MCF 10A (cell line): ENCODE measurements at regions of chr5 and their contacts with region 1.

Region 1: DNA sequence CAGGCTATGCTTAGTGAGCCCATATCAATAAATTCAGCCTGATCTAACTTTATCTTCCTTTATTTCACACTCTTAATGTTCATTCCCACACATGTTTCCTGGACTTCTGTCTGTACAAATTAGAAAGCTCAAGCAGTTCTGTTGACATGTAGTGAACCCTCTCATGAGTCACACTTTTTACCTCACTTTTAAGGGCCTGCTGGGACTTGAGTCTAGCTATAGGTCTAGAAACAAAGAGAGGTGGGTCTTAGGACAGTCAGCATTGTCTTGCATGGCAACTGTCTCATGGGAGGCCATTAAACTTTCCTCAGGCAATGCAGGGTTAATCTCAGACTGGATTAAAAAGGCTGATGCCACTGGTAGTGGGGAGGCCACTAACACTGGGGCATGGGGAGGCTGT is 8.6 kb upstream of the CCNH start:
- DNase-seq: peak; percentile 54
- H3K4me3 Mint-ChIP-seq: no peak overlapping the region
- H3K27ac Mint-ChIP-seq: no peak overlapping the region
- H3K4me1 Mint-ChIP-seq: peaks cover 12% of the 10 kb centered on the region
- H3K27me3 Mint-ChIP-seq: no peaks in the 10 kb centered on the region
- CTCF ChIP-seq: no peak

Region 2: DNA sequence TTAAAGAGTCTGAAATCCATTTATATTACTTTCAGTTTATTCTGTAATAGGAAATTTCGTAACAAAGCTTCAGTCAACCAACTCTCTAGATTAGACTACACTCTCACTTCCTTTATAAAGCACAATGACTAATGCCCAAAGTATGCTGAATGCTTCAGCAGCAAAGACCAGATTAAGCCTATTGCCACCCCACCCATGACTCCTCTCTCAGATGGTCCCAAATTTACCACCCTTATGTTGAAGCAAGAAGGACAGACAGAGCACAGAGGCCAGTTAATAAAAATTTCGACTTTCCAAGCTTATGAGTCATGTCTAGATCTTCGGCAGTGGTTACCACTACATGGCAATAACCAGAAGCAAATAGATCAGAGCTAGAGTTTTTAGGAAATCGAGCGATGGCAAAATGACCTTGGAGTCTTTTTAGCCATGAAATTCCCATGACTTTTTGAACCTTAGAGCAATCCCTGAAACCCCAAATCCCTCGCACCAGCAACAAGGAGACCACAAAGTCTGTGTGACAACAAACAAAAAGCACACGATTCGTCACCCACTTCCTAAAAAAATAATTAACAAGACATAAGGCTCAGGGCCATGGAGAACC is 441.4 kb before region 1 on chr5:
- CTCF ChIA-PET with region 1: no interaction called
- POLR2A ChIA-PET with region 1: no interaction called
- intact Hi-C with region 1: no loop called
- DNase-seq: peak; percentile 63
- H3K4me3 Mint-ChIP-seq: no peak overlapping the region
- H3K27ac Mint-ChIP-seq: no peak overlapping the region
- H3K4me1 Mint-ChIP-seq: peaks cover 8% of the 10 kb centered on the region
- H3K27me3 Mint-ChIP-seq: no peaks in the 10 kb centered on the region
- CTCF ChIP-seq: no peak

Region 3: DNA sequence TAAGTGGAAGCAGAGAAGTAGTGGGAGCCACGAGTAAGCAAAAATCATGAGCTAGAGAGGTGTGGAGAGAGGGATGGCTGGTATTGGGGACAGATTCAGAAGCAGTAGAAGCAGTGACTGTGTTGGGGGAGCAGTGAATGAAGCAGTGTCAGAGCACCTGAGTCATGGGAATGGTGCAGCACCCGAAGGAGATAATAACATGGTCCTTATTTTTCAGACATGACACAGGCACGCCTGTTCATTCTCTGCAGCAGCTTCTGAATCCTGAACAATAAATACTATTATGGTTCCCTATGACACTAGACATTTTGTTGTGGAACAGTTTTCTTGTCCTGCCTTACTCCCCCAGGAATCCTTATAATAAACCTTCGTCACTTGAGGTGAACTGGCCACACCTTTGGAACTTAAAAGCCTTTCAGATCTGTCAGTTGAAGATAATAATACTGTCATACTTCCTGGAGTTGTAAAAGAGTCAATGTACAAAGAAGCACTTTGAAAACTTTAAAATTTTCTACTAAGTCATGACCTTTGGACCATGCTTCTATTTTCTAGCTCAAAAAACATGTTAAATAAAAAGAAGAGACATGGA is 160.6 kb before region 1 on chr5:
- CTCF ChIA-PET with region 1: no interaction called
- POLR2A ChIA-PET with region 1: no interaction called
- intact Hi-C with region 1: no loop called
- DNase-seq: no peak
- H3K4me3 Mint-ChIP-seq: no peak overlapping the region
- H3K27ac Mint-ChIP-seq: no peak overlapping the region
- H3K4me1 Mint-ChIP-seq: no peaks in the 10 kb centered on the region
- H3K27me3 Mint-ChIP-seq: no peaks in the 10 kb centered on the region
- CTCF ChIP-seq: no peak

Region 4: GRCh38 chr5:87627363-87627762 is 206.1 kb after region 1 on chr5:
- CTCF ChIA-PET with region 1: no interaction called
- POLR2A ChIA-PET with region 1: no interaction called
- intact Hi-C with region 1: loop called (anchors 10 kb)
- DNase-seq: no peak
- H3K4me3 Mint-ChIP-seq: no peak overlapping the region
- H3K27ac Mint-ChIP-seq: no peak overlapping the region
- H3K4me1 Mint-ChIP-seq: no peaks in the 10 kb centered on the region
- H3K27me3 Mint-ChIP-seq: peaks cover 79% of the 10 kb centered on the region
- CTCF ChIP-seq: no peak

Region 5: DNA sequence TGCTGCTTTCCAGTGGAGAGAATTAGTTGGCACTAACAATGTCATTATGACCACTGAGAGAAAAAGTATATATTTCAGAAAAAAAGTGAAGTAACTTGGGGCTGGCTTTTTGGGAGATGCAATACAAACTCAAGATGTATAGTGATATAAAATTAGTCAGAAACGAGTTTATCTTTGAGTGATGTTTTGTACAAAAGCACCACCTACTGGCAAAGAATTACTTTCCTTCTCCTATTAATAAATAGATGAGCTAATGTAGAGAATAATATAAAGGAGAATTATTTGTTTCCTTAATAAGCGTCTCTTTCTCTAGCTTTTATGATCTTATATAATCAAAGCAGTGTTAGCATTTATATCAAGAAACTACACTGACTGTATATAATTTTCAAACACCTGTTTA is 1302.9 kb after region 1 on chr5:
- CTCF ChIA-PET with region 1: no interaction called
- POLR2A ChIA-PET with region 1: no interaction called
- intact Hi-C with region 1: loop called (anchors 5 kb)
- DNase-seq: peak; percentile 8
- H3K4me3 Mint-ChIP-seq: no peak overlapping the region
- H3K27ac Mint-ChIP-seq: no peak overlapping the region
- H3K4me1 Mint-ChIP-seq: no peaks in the 10 kb centered on the region
- H3K27me3 Mint-ChIP-seq: peaks cover 62% of the 10 kb centered on the region
- CTCF ChIP-seq: peak; percentile 40